H1 (cell line): ENCODE measurements at regions of chr2 and their contacts with region 1.

Region 1: DNA sequence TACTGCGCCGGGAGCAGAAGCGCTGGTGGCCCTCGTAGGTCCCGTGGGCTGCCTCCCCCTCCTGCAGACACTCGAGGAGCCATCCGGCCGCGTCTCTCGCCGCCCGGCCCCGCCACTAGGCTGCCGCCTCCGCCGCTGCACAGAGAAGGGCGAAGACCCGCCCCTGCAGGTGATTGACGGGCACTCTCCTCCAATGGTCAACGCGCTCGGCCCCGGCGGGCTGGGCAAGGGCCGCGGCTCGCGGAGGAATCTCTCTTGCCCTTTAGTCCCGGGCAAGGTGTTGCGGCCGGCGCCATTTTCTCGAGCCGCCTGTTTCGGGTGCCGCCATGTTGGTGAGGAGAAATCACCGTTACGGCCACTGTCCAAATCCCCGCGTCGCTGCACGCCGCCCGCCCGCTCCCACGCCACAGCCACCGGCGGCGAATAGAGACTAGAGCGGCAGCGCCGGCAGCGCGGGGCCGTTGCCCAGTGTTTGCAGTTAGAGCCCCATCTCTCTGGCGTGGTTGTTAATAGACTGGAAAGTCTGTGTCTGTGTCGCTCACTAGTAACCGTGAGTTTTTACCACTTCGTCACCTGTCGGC is at the start of gene ZC3H6:
- DNase-seq: peak; percentile 92 to 100
- H3K4me3 ChIP-seq: peak within 1 kb of the TSS; percentile 88 to 98 (median 91)
- H3K27ac ChIP-seq: peak within 1 kb of the TSS; percentile 100
- H3K4me1 ChIP-seq: peaks cover 0 to 3% (median 0%) of the 10 kb centered on the region in 4 experiments; a peak in 1 of 7 replicates
- H3K27me3 ChIP-seq: no peaks in the 10 kb centered on the region
- CTCF ChIP-seq: no peak
- EP300 ChIP-seq: no peak
- POLR2A ChIP-seq: peak; percentile 95
- RAD21 ChIP-seq: no peak
- total RNA-seq, gene ZC3H6: 6.9 and 7.3 TPM in 2 replicates

Region 2: DNA sequence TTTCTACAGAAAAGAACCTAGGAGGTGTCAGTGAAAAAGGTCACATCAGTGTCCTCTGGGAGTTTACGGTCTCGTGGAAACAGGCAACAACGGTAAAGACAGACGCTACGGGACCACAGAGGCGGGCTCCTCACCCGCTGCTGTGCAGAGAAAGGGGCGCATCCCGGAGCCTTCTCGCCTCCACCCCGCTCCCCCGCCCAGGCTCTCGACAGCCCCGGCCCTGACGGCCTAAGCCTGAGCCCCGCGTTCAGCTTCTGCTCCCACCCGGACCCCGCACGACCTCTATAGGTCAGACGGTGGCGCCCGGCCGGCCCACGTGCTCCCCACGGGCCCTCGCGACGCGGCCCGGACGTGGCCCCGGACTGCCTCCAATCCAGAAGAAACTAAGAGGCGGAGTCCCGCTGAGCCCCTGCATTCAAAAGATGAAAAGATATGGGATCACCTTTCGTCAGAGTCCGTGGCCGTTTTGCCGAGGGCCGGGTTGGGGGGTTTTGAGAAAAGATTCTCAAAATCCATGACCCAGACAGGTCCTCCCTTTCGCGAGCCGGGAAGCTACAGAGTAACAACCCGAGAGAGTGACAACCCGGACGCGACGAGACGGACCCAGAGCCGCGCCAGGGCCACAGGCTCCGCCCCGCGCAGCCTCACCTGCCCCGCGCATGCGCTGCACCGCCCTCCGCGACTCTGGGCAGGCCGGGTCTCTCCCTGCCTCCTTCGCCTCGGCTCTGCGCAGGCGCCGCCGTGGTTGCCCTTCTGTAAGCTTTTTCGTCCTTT is 20.7 kb before region 1 on chr2 and contains the start of gene ZC3H8:
- CTCF ChIA-PET with region 1: interaction called, 12 read pairs
- POLR2A ChIA-PET with region 1: interaction called, 16 read pairs
- DNase-seq: peak; percentile 70 to 97
- H3K4me3 ChIP-seq: peak within 1 kb of the TSS; percentile 75 to 83 (median 80)
- H3K27ac ChIP-seq: no peak within 1 kb of the TSS
- H3K4me1 ChIP-seq: peaks cover 0 to 2% (median 0%) of the 10 kb centered on the region in 4 experiments; a peak in 1 of 7 replicates
- H3K27me3 ChIP-seq: no peaks in the 10 kb centered on the region
- CTCF ChIP-seq: no peak
- EP300 ChIP-seq: 0 out of 3 replicates have a peak, but pooled peaks of 1 of the 2 experiments have one; percentile 7
- POLR2A ChIP-seq: peak in 1 of 2 experiments; percentile 74; a peak in 2 of 3 replicates
- RAD21 ChIP-seq: no peak; a peak in 1 of 4 replicates
- total RNA-seq, gene ZC3H8: 7.1 and 8.8 TPM in 2 replicates

Region 3: GRCh38 chr2:112259509-112260294 is 15.7 kb before region 1 on chr2:
- CTCF ChIA-PET with region 1: interaction called, 12 read pairs
- POLR2A ChIA-PET with region 1: interaction called, 16 read pairs
- DNase-seq: peak; percentile 62 to 86
- H3K4me3 ChIP-seq: no peak overlapping the region
- H3K27ac ChIP-seq: no peak overlapping the region
- H3K4me1 ChIP-seq: peaks cover 0 to 4% (median 0%) of the 10 kb centered on the region in 4 experiments; a peak in 2 of 7 replicates
- H3K27me3 ChIP-seq: no peaks in the 10 kb centered on the region
- CTCF ChIP-seq: peak; percentile 92 to 98 (median 96)
- EP300 ChIP-seq: no peak
- POLR2A ChIP-seq: no peak
- RAD21 ChIP-seq: peak; percentile 91